Activated CD4-positive, alpha-beta T cell treated with anti-CD3 and anti-CD28 coated beads for 36 hours (primary cell): ENCODE measurements at regions of chr10 and their contacts with region 1.

Region 1: DNA sequence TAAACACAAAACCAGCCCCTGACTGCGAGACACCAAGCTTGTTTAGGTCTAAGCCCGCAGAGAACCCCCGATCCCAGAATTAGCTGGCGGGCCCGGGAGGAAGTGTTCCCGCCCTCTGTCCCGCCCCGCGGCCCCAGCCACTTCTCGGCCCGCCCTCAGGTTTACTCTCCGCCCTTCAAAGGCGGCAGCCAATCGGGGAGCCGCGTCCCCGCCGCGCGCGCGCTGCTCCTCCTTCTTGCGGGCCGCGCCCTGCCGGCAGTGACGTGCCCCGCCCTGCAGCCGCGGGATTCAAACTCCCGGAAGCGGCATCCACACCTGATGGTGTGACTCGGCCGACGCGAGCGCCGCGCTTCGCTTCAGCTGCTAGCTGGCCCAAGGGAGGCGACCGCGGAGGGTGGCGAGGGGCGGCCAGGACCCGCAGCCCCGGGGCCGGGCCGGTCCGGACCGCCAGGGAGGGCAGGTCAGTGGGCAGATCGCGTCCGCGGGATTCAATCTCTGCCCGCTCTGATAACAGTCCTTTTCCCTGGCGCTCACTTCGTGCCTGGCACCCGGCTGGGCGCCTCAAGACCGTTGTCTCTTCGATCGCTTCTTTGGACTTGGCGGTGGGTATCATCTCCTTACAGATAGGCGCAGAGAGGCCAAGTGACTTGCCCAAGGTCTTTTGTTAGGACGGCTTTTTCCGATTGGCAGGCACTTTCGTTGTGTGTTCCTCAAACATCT is at the start of gene CEP55:
- DNase-seq: peak; percentile 98
- ATAC-seq: peak; percentile 99
- H3K4me3 Mint-ChIP-seq: peak within 1 kb of the TSS; percentile 78
- H3K27ac Mint-ChIP-seq: peak within 1 kb of the TSS; percentile 84
- H3K4me1 Mint-ChIP-seq: peaks cover 25% of the 10 kb centered on the region
- H3K27me3 Mint-ChIP-seq: peaks cover 2% of the 10 kb centered on the region
- total RNA-seq, gene CEP55: 67.8 to 76.0 TPM

Region 2: GRCh38 chr10:92657024-92657423 is 839.5 kb before region 1 on chr10:
- CTCF ChIA-PET with region 1: no interaction called
- POLR2A ChIA-PET with region 1: no interaction called
- intact Hi-C with region 1: no loop called
- DNase-seq: no peak
- ATAC-seq: no peak
- H3K4me3 Mint-ChIP-seq: no peak overlapping the region
- H3K27ac Mint-ChIP-seq: no peak overlapping the region
- H3K4me1 Mint-ChIP-seq: no peaks in the 10 kb centered on the region
- H3K27me3 Mint-ChIP-seq: no peaks in the 10 kb centered on the region

Region 3: DNA sequence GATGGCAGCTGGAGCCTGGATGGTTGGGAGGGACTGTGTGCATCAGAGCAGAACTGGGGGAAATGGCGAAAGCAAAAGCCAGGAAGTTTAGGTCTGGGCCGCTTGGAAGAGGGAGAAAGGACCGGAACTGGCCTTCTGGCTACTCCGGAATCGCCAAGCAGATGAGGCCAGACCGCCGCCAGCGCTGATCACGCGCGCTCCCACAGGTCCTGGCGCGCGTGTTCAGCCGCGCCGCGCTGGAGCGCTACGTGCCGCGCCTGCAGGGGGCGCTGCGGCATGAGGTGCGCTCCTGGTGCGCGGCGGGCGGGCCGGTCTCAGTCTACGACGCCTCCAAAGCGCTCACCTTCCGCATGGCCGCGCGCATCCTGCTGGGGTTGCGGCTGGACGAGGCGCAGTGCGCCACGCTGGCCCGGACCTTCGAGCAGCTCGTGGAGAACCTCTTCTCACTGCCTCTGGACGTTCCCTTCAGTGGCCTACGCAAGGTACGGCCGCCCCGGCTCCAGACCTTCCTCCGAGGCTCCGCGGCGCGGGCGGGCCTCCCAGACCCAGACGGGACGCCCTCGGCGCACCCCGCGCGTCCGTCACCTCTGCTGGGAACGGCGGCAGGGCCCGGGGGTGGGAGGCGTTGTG is 433.9 kb before region 1 on chr10:
- CTCF ChIA-PET with region 1: no interaction called
- POLR2A ChIA-PET with region 1: no interaction called
- intact Hi-C with region 1: loop called in 1 of 2 experiments (anchors 5 kb)
- DNase-seq: peak; percentile 81
- ATAC-seq: peak; percentile 91
- H3K4me3 Mint-ChIP-seq: peak overlapping the region; percentile 66
- H3K27ac Mint-ChIP-seq: no peak overlapping the region
- H3K4me1 Mint-ChIP-seq: peaks cover 21% of the 10 kb centered on the region
- H3K27me3 Mint-ChIP-seq: peaks cover 53% of the 10 kb centered on the region

Region 4: DNA sequence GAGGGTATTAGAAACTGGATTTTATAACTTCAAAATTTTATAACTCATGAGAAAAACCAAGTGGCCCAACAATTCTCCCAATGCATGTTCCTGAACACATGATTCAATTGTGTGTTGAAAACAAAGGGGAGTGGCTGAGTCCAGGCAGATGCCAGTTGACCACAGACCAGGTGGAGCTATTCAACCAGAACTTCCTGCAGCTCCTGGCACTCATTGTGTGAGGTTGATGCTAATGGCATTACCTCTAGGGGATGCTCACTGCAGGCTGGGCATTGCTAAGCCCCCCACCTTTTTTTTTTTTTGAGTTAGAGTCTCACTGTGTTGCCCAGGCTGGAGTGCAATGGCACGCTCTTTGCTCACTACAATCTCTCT is 34.7 kb before region 1 on chr10:
- CTCF ChIA-PET with region 1: no interaction called
- POLR2A ChIA-PET with region 1: interaction called, 3 read pairs
- intact Hi-C with region 1: loop called in 1 of 2 experiments (anchors 1 kb)
- DNase-seq: no peak
- ATAC-seq: no peak
- H3K4me3 Mint-ChIP-seq: no peak overlapping the region
- H3K27ac Mint-ChIP-seq: no peak overlapping the region
- H3K4me1 Mint-ChIP-seq: peaks cover 21% of the 10 kb centered on the region
- H3K27me3 Mint-ChIP-seq: no peaks in the 10 kb centered on the region

Region 5: GRCh38 chr10:93509816-93510215 is 13.3 kb after region 1 on chr10:
- CTCF ChIA-PET with region 1: interaction called, 18 read pairs
- POLR2A ChIA-PET with region 1: interaction called, 4 read pairs
- intact Hi-C with region 1: loop called in 1 of 2 experiments (anchors 1 kb)
- DNase-seq: no peak
- ATAC-seq: peak; percentile 42
- H3K4me3 Mint-ChIP-seq: no peak overlapping the region
- H3K27ac Mint-ChIP-seq: no peak overlapping the region
- H3K4me1 Mint-ChIP-seq: peaks cover 29% of the 10 kb centered on the region
- H3K27me3 Mint-ChIP-seq: no peaks in the 10 kb centered on the region

Region 6: DNA sequence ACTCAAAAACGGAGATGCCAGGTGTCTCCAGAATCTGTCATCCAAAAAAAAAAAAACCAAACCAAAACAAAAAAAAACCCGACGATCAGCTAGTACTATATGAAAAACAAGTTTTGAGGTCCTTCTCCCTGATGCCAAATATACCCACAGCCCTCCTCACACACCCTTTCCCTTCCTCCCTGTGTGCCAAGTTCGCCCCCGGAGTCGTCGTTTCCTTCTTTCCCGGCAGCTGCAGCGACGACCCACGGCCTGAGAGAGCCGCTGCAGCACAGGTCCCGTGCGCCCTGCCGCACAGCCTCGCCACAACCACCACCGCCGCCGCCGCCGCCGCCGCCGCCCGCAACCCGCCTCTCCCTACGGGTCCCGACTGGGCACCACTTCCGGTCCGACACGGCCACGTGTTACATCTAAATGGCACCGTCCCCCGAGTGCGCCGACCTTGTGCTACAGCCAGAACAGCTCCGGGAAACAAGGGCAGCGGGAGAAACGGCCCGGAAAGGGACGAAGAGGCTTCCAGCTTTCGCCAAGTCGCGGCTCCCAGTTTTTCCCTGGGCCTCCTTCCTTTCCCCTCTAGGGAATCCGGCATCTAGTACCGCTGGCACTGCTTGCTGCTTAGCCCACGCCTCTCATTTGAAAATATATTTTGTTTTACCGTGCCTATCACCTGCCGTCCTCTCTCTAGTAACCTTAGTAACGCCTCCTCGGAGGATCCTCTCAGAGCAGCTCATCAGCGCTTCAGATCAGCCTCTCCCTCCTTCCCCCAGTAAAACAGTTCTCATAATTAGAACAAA is 205.9 kb after region 1 on chr10 and contains the start of gene FRA10AC1:
- CTCF ChIA-PET with region 1: no interaction called
- POLR2A ChIA-PET with region 1: no interaction called
- intact Hi-C with region 1: loop called (anchors 1 kb)
- DNase-seq: peak; percentile 93
- ATAC-seq: peak; percentile 84
- H3K4me3 Mint-ChIP-seq: no peak within 1 kb of the TSS
- H3K27ac Mint-ChIP-seq: no peak within 1 kb of the TSS
- H3K4me1 Mint-ChIP-seq: peaks cover 29% of the 10 kb centered on the region
- H3K27me3 Mint-ChIP-seq: no peaks in the 10 kb centered on the region
- total RNA-seq, gene FRA10AC1: 18.9 to 29.4 TPM